ENCODE measurements at regions of chr2 and their contacts with region 1.

Region 1: DNA sequence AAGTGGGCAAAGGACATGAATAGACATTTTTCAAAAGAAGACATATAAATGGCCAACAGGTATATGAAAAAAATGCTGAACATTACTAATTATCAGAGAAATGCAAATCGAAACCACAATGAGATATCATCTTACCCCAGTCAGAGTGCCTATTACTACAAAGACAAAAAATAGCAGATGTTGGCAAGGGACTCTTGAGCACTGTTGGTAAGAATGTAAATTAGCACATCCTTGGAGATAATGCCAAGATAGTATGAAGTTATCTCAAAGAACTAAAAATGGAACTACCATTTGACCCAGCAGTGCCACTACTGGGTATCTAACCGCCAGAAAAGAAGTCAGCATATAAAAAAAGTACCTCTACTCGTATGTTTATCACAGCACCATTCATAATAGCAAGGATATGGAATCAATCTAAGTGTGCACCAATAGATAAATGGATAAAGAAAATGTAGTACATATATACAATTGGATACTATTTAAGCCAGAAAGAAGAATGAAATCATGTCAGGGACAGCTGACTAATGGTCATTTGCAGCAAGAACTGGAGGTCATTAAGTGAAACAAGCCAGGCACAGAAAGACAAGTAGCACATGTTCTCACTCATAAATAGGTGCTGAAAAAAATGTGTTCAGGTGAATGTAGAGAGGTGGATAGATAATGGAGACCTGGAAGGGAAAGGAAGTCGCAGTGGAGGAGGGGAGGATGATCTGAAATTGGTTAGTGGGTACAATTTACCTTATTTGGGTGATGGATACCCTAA is 141.7 kb upstream of the B3GNT2 start:
- DNase-seq: no peak
- H3K4me3 Mint-ChIP-seq: no peak overlapping the region
- H3K27ac Mint-ChIP-seq: no peak overlapping the region
- H3K4me1 Mint-ChIP-seq: no peaks in the 10 kb centered on the region
- H3K27me3 Mint-ChIP-seq: no peaks in the 10 kb centered on the region
- CTCF ChIP-seq: no peak

Region 2: DNA sequence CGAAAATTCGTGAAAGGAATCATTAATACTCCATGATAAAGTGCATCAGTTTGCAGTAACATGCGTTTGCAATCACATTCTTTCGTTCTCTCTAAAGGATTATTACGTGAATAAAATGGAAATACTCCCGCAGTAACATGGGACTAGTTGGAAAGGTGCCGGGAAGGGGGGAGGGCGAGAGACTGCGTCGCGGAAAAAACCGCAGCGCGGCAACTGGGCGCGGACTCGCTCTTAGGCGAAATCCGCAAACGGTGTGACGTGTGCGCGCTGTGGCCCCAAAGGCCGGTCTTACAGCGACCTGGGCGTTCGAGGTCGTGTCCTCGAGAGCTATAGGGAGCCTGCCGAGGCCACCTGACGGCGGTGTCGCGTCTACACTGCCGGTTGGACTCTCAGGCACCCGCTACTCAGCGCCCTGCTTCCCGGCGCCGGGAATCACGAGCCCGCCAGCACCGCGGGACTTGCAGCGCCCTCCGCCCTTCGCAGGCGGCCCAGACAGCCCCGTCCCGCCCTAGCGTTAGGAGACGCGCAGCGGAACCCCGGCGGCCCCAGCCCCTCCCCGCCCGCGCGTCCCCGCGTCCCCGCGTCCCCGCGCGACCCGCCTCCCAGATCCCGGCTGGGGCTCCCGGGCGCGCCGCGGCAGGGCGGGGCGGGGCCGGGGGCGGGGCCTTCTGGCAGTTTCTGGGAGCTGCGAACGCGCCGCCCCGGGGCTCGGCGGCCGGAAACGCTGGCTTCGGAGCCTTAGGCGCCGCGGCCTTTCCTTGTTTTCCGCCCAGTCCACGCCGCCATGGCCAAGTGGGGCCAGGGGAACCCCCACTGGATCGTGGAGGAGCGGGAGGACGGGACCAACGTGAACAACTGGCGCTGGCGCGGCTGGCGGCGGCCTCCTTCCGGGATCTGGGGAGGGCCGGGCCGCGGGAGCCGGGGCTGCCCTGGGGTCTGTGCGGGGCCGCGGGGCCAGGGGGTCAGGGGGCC is 877.2 kb before region 1 on chr2:
- CTCF ChIA-PET with region 1: no interaction called
- intact Hi-C with region 1: loop called (anchors 5 kb)
- DNase-seq: peak; percentile 96
- H3K4me3 Mint-ChIP-seq: peak overlapping the region; percentile 72
- H3K27ac Mint-ChIP-seq: peak overlapping the region; percentile 66
- H3K4me1 Mint-ChIP-seq: peaks cover 37% of the 10 kb centered on the region
- H3K27me3 Mint-ChIP-seq: no peaks in the 10 kb centered on the region
- CTCF ChIP-seq: no peak

Region 3: DNA sequence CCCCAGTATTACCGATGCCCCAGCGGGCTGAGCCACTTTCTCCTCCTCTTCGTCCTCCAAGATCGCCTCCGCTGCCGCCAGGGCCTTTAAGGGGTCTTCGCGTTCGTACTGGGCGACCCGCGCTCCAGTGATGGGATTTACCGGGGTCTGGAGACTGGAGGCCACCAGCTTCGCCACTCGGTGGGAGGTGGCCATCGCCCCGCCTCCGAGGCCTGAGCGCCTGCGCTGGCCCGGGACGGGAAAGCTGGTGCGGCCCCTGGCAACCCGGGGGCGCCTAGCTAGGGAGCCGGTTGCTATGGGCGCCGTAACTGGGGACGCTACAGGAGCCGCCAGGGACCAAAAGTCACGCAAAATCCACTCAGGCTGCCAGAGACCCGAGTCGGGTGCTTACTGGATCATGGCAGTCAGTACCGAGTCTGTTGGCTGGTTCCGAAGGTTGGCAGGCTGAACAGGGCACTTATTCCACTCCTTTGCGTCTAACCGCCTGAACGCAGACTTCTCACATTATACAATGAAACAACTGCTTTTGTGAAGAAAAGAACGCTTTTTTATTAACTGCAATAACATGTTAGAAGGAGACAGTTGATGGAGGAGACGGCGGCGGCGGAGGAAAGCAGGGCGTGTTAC is 200.2 kb before region 1 on chr2 and contains the start of gene FAM161A:
- CTCF ChIA-PET with region 1: no interaction called
- intact Hi-C with region 1: no loop called
- DNase-seq: peak; percentile 87
- H3K4me3 Mint-ChIP-seq: peak within 1 kb of the TSS; percentile 78
- H3K27ac Mint-ChIP-seq: peak within 1 kb of the TSS; percentile 80
- H3K4me1 Mint-ChIP-seq: no peaks in the 10 kb centered on the region
- H3K27me3 Mint-ChIP-seq: no peaks in the 10 kb centered on the region
- CTCF ChIP-seq: no peak
- total RNA-seq, gene FAM161A: 9.1 and 13.4 TPM in 2 replicates